Activated T-helper 1 cell treated with anti-CD3 and anti-CD28 coated beads, Interleukin-12 subunit alpha, Interleukin-12 subunit beta, Interleukin-2, Interleukin-4 antibody, amounts not matched to agents 30 ng/mL and 10 ng/mL and 1 ng/mL, durations not matched to agents 14 hours and 24 hours and 36 hours (primary cell): ENCODE measurements at regions of chr12 and their contacts with region 1.

Region 1: GRCh38 chr12:93025145-93025805 is 96.2 kb upstream of the EEA1 start:
- DNase-seq: no peak
- H3K4me3 Mint-ChIP-seq: no peak overlapping the region
- H3K27ac Mint-ChIP-seq: no peak overlapping the region
- H3K4me1 Mint-ChIP-seq: no peaks in the 10 kb centered on the region
- H3K27me3 Mint-ChIP-seq: peaks cover 2% of the 10 kb centered on the region

Region 2: GRCh38 chr12:92224685-92225331 is 800.5 kb before region 1 on chr12:
- intact Hi-C with region 1: no loop called
- DNase-seq: no peak
- H3K4me3 Mint-ChIP-seq: no peak overlapping the region
- H3K27ac Mint-ChIP-seq: no peak overlapping the region
- H3K4me1 Mint-ChIP-seq: peaks cover 9% of the 10 kb centered on the region
- H3K27me3 Mint-ChIP-seq: no peaks in the 10 kb centered on the region

Region 3: DNA sequence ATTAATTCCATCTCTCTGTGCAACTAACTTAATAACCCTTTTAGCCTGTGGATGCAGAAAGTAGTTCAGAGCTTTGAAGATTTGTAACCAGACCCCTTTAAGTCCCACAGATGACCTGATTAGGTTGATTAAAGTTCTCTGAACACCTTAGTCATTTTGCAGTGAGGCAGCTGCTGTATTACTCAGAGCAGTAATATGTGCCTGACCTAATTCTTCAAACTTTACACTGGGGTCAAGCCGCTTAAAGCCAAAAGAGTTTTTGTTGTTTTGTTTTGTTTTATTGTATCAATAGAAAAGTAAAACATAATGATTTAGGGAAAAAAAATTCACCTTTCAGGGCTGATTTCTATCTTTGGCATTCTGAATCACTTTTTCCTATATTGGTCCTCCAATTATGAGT is 401.0 kb before region 1 on chr12:
- intact Hi-C with region 1: no loop called
- DNase-seq: no peak
- H3K4me3 Mint-ChIP-seq: no peak overlapping the region
- H3K27ac Mint-ChIP-seq: no peak overlapping the region
- H3K4me1 Mint-ChIP-seq: no peaks in the 10 kb centered on the region
- H3K27me3 Mint-ChIP-seq: peaks cover 1% of the 10 kb centered on the region

Region 4: DNA sequence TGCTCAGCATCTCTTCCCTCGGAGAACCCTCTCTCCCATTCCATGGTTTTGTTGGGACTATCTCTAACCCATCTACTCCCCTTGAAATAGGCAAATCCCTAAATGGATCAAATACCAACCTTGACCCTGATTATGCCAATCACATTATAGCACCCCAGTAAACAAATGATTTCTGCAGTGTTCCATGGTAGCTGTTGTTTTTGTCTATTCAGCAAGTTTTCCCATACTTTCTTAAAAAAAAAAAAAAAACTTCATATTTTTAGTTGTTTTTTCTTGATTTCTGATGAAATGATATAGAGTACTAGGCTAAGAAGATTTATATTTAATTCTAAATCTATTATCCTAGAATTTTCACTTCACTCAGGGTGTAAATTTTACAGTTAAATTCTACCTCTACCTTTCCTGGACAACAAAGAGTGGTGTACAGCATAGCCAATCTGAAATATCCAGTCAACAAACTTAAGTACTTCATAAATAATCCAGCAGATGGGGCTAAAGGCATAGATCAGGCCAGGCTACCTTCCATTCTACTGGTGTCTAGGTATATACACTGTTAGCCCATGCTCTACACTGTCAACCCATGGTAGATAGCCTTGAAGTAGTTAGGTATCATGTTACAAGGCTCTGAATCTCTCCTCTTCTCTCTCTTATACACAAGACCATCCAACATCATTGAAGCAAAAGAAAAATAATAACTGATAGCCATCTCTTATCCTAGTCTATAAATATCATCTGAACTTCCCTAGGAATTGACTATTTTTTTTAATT is 240.3 kb before region 1 on chr12:
- intact Hi-C with region 1: loop called (anchors 5 kb)
- DNase-seq: peak; percentile 5
- H3K4me3 Mint-ChIP-seq: no peak overlapping the region
- H3K27ac Mint-ChIP-seq: no peak overlapping the region
- H3K4me1 Mint-ChIP-seq: peaks cover 4% of the 10 kb centered on the region
- H3K27me3 Mint-ChIP-seq: no peaks in the 10 kb centered on the region